ENCODE measurements at regions of chr17 and their contacts with region 1.

Region 1: DNA sequence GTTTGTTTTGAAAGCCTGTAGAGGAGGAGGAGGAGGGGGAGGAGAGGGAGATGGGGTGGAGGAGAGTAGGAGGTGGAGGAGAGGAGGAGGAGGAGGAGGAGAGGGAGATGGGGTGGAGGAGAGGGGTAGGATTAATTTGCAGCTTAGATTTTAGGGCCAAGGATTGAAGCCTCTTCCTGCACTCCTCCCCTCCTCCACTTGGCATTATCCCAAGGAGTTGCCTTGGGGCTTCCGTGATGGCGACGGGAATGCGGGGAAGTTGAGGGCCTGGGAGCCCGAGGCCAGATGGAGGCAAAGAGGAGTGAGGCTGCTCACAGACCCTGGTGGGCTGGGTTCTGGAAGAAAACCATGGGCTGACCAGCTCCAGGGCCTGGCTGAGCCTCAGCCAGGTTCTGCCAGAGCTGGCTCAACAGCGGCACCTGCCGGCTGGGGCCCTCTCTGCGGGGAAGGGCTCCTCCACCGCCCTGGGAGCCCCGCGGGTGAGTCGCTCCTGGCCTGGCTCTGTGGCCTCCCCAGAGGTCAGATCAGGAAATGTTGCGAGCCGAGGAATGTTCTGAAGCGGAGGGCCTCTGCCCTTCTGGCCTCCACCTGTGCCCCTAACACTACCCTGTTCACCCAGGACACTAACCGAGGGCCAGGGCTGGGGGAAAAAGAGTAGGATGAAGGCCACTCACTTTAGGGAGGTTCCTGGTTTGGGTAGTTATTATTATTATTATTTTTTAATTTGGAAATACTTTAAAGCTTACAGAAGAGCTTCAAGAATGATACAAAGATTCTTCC is 23.9 kb upstream of the FMNL1 start:
- DNase-seq: peak; percentile 91 to 96
- ATAC-seq: peak; percentile 95 to 100 (median 98)
- H3K4me3 ChIP-seq: peak overlapping the region in 1 of 10 donors; percentile 1
- H3K27ac ChIP-seq: peak overlapping the region in 7 of 10 donors; percentile 36 to 65 (median 48)
- H3K4me1 ChIP-seq: peaks cover 0 to 23% (median 10%) of the 10 kb centered on the region in 9 donors
- H3K27me3 ChIP-seq: no peaks in the 10 kb centered on the region
- CTCF ChIP-seq: peak; percentile 98 to 100 (median 99)

Region 2: GRCh38 chr17:45148183-45149036 is 49.3 kb before region 1 on chr17 and contains the start of gene HEXIM1:
- intact Hi-C with region 1: loop called in 1 of 10 experiments (anchors 5 kb)
- DNase-seq: peak; percentile 99
- ATAC-seq: peak; percentile 73 to 91 (median 84)
- H3K4me3 ChIP-seq: peak within 1 kb of the TSS; percentile 63 to 97 (median 76)
- H3K27ac ChIP-seq: peak within 1 kb of the TSS; percentile 92 to 99 (median 98)
- H3K4me1 ChIP-seq: peaks cover 11 to 62% (median 54%) of the 10 kb centered on the region in 9 donors
- H3K27me3 ChIP-seq: no peaks in the 10 kb centered on the region
- CTCF ChIP-seq: no peak
- total RNA-seq, gene HEXIM1: 17.0 to 37.4 (median 20.1) TPM

Region 3: GRCh38 chr17:45161019-45161825 is 36.5 kb before region 1 on chr17:
- intact Hi-C with region 1: loop called in 2 of 10 experiments (anchors 5 kb)
- DNase-seq: peak; percentile 96 to 99
- ATAC-seq: peak; percentile 94 to 97 (median 97)
- H3K4me3 ChIP-seq: peak overlapping the region; percentile 79 to 98 (median 94)
- H3K27ac ChIP-seq: peak overlapping the region; percentile 99 to 100 (median 100)
- H3K4me1 ChIP-seq: peaks cover 10 to 55% (median 39%) of the 10 kb centered on the region in 9 donors
- H3K27me3 ChIP-seq: no peaks in the 10 kb centered on the region
- CTCF ChIP-seq: peak in 3 of 9 donors; percentile 2 to 58 (median 57)

Region 4: GRCh38 chr17:45247429-45248131 is 49.8 kb after region 1 on chr17:
- intact Hi-C with region 1: no loop called
- DNase-seq: peak; percentile 83 to 84
- ATAC-seq: peak; percentile 77 to 93 (median 86)
- H3K4me3 ChIP-seq: peak overlapping the region; percentile 16 to 64 (median 61)
- H3K27ac ChIP-seq: peak overlapping the region in 7 of 10 donors; percentile 47 to 86 (median 59)
- H3K4me1 ChIP-seq: peaks cover 4 to 37% (median 23%) of the 10 kb centered on the region in 9 donors
- H3K27me3 ChIP-seq: no peaks in the 10 kb centered on the region
- CTCF ChIP-seq: no peak

Region 5: GRCh38 chr17:45277216-45277849 is 79.6 kb after region 1 on chr17:
- intact Hi-C with region 1: no loop called
- DNase-seq: peak; percentile 94
- ATAC-seq: peak; percentile 58 to 85 (median 74)
- H3K4me3 ChIP-seq: peak overlapping the region in 2 of 10 donors; percentile 2 to 5
- H3K27ac ChIP-seq: peak overlapping the region; percentile 27 to 90 (median 80)
- H3K4me1 ChIP-seq: peaks cover 12 to 53% (median 36%) of the 10 kb centered on the region in 9 donors
- H3K27me3 ChIP-seq: no peaks in the 10 kb centered on the region
- CTCF ChIP-seq: peak; percentile 69 to 88 (median 80)

Measured in heart right ventricle (tissue), 16 donors.